ENCODE measurements at regions of chr6 and their contacts with region 1.

Region 1: GRCh38 chr6:108782179-108783041 is 65.8 kb upstream of the ARMC2 start:
- DNase-seq: peak; percentile 91
- ATAC-seq: peak; percentile 99
- H3K4me3 Mint-ChIP-seq: peak overlapping the region; percentile 71
- H3K27ac Mint-ChIP-seq: no peak overlapping the region
- H3K4me1 Mint-ChIP-seq: peaks cover 10% of the 10 kb centered on the region
- H3K27me3 Mint-ChIP-seq: peaks cover 3% of the 10 kb centered on the region

Region 2: DNA sequence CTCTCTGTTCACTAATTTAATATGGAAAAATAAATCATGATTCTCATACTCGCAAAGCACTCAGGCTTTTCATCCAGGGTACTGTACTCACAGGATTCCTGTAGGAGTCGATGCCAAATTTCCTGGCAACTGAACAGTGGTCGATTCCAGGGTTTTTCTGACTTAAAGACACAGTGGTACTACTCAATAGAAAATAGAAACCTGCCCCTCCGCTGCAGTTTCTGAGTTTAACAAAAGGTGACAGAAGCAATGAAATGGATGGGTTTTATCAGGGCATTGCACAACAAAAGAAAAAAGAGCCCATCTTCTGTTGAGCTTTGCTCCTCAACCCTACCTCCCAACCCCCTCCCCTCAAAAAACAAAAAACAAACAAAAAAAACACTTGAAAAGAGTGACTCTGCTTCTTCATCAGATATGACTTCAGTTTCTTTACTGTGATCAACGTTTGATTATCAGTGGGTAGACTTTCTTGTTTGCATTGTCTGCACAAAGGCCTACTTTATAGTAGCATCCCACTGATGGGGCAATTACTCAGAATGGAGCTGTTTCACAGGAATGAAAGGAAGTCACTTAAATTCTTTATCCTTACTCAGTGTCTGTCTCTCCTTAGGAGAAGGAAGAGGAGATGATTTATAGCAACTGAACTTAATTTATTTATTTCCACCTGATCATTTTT is 317.9 kb before region 1 on chr6:
- CTCF ChIA-PET with region 1: no interaction called
- POLR2A ChIA-PET with region 1: no interaction called
- intact Hi-C with region 1: no loop called
- DNase-seq: no peak
- ATAC-seq: no peak
- H3K4me3 Mint-ChIP-seq: no peak overlapping the region
- H3K27ac Mint-ChIP-seq: no peak overlapping the region
- H3K4me1 Mint-ChIP-seq: no peaks in the 10 kb centered on the region
- H3K27me3 Mint-ChIP-seq: peaks cover 16% of the 10 kb centered on the region

Region 3: GRCh38 chr6:108541838-108542759 is 240.3 kb before region 1 on chr6:
- CTCF ChIA-PET with region 1: interaction called, 15 read pairs
- POLR2A ChIA-PET with region 1: no interaction called
- intact Hi-C with region 1: loop called (anchors 1 kb)
- DNase-seq: peak; percentile 81
- ATAC-seq: peak; percentile 79
- H3K4me3 Mint-ChIP-seq: no peak overlapping the region
- H3K27ac Mint-ChIP-seq: no peak overlapping the region
- H3K4me1 Mint-ChIP-seq: peaks cover 7% of the 10 kb centered on the region
- H3K27me3 Mint-ChIP-seq: no peaks in the 10 kb centered on the region

Region 4: DNA sequence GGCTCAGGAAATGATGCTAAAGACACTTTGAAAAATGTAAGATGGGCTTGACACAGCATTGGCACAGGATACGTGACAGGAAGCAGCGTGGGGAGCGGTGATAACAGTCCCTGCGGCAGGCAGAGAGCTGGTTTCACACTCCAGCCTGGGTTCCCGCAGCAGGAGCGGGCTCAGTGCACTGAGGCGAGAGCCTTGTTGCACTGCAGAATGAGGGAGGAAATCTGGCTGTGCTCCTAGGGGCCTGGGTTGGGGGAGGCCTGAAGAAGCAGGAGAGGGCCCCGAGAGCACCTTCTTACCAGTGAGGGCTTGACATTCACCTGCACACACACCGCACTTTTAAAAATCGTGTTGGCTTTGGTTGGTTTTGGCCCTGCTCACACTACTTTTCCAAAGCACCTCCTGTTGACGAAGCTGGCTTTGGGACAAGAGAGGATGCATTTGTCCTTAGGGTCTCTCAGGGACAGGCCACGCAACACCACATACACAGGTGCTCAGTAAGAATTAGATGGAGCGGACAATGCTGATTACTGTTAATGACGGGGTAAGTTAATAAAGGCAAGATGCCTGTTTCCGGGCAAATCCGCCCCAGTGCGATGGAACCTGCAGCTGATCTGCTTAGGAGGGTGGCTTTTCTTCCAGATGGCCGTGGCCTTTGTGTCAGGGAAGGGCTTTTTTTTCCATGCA is 16.4 kb after region 1 on chr6:
- CTCF ChIA-PET with region 1: interaction called, 10 read pairs
- POLR2A ChIA-PET with region 1: no interaction called
- intact Hi-C with region 1: no loop called
- DNase-seq: peak; percentile 80
- ATAC-seq: peak; percentile 98
- H3K4me3 Mint-ChIP-seq: peak overlapping the region; percentile 45
- H3K27ac Mint-ChIP-seq: peak overlapping the region; percentile 86
- H3K4me1 Mint-ChIP-seq: peaks cover 18% of the 10 kb centered on the region
- H3K27me3 Mint-ChIP-seq: peaks cover 3% of the 10 kb centered on the region

Region 5: GRCh38 chr6:108835218-108835850 is 52.9 kb after region 1 on chr6:
- CTCF ChIA-PET with region 1: interaction called, 3 read pairs
- POLR2A ChIA-PET with region 1: no interaction called
- intact Hi-C with region 1: loop called (anchors 2 to 5 kb)
- DNase-seq: peak; percentile 93
- ATAC-seq: peak; percentile 96
- H3K4me3 Mint-ChIP-seq: no peak overlapping the region
- H3K27ac Mint-ChIP-seq: no peak overlapping the region
- H3K4me1 Mint-ChIP-seq: peaks cover 20% of the 10 kb centered on the region
- H3K27me3 Mint-ChIP-seq: no peaks in the 10 kb centered on the region

Region 6: GRCh38 chr6:108896111-108896661 is 113.8 kb after region 1 on chr6:
- CTCF ChIA-PET with region 1: no interaction called
- POLR2A ChIA-PET with region 1: no interaction called
- intact Hi-C with region 1: loop called (anchors 2 to 10 kb)
- DNase-seq: no peak
- ATAC-seq: peak; percentile 42
- H3K4me3 Mint-ChIP-seq: no peak overlapping the region
- H3K27ac Mint-ChIP-seq: no peak overlapping the region
- H3K4me1 Mint-ChIP-seq: peaks cover 13% of the 10 kb centered on the region
- H3K27me3 Mint-ChIP-seq: no peaks in the 10 kb centered on the region